Breast epithelium (tissue), 4 donors: ENCODE measurements at regions of chr11 and their contacts with region 1.

Region 1: GRCh38 chr11:83299681-83300080 is 13.5 kb upstream of the CCDC90B start:
- DNase-seq: no peak
- H3K4me3 ChIP-seq: no peak overlapping the region
- H3K27ac ChIP-seq: no peak overlapping the region
- H3K4me1 ChIP-seq: no peaks in the 10 kb centered on the region
- H3K27me3 ChIP-seq: no peaks in the 10 kb centered on the region
- CTCF ChIP-seq: no peak
- POLR2A ChIP-seq: no peak

Region 2: GRCh38 chr11:83336993-83337392 is 37.3 kb after region 1 on chr11:
- intact Hi-C with region 1: loop called (anchors 2 kb)
- DNase-seq: no peak
- H3K4me3 ChIP-seq: no peak overlapping the region
- H3K27ac ChIP-seq: no peak overlapping the region
- H3K4me1 ChIP-seq: no peaks in the 10 kb centered on the region
- H3K27me3 ChIP-seq: no peaks in the 10 kb centered on the region
- CTCF ChIP-seq: no peak
- POLR2A ChIP-seq: no peak